Activated CD4-positive, alpha-beta memory T cell treated with anti-CD3 and anti-CD28 coated beads for 36 hours (primary cell): ENCODE measurements at regions of chr7 and their contacts with region 1.

Region 1: GRCh38 chr7:66894463-66895080 is 26.5 kb upstream of the TMEM248 start:
- DNase-seq: peak; percentile 14
- H3K4me3 Mint-ChIP-seq: no peak overlapping the region
- H3K27ac Mint-ChIP-seq: no peak overlapping the region
- H3K4me1 Mint-ChIP-seq: no peaks in the 10 kb centered on the region
- H3K27me3 Mint-ChIP-seq: no peaks in the 10 kb centered on the region

Region 2: GRCh38 chr7:66804001-66804400 is 90.6 kb before region 1 on chr7:
- CTCF ChIA-PET with region 1: no interaction called
- POLR2A ChIA-PET with region 1: no interaction called
- intact Hi-C with region 1: no loop called
- DNase-seq: no peak
- H3K4me3 Mint-ChIP-seq: no peak overlapping the region
- H3K27ac Mint-ChIP-seq: no peak overlapping the region
- H3K4me1 Mint-ChIP-seq: no peaks in the 10 kb centered on the region
- H3K27me3 Mint-ChIP-seq: no peaks in the 10 kb centered on the region

Region 3: DNA sequence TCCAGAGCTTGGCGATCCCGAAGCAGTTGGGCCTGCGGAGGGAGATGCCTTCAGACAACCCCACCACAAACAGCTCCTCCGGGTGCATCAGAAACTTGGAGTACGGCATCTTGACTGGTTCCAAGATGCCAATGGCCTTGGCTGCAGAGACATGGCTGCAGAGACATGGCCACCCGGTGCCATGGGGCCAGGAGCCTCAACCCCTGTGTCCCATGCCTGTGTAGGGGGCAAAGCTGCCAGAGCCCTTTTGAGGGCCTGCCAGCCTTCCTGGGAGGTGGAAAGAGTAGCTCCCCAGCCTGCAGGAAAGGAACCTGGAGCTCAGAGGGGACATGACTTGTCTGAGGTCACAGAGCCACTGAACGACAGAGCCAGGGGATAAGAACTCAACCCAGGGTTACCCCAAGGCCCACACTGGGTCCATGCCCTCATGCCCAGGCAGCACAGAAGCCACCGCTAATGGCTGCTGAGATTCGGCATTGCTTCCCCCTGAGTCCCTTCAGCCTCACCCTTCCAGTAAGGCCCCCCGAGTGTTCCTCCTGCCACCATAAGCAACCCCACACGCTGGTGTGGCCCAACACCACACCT is 70.4 kb before region 1 on chr7:
- CTCF ChIA-PET with region 1: interaction called, 4 read pairs
- POLR2A ChIA-PET with region 1: no interaction called
- intact Hi-C with region 1: loop called (anchors 1 kb)
- DNase-seq: no peak
- H3K4me3 Mint-ChIP-seq: no peak overlapping the region
- H3K27ac Mint-ChIP-seq: no peak overlapping the region
- H3K4me1 Mint-ChIP-seq: no peaks in the 10 kb centered on the region
- H3K27me3 Mint-ChIP-seq: no peaks in the 10 kb centered on the region

Region 4: DNA sequence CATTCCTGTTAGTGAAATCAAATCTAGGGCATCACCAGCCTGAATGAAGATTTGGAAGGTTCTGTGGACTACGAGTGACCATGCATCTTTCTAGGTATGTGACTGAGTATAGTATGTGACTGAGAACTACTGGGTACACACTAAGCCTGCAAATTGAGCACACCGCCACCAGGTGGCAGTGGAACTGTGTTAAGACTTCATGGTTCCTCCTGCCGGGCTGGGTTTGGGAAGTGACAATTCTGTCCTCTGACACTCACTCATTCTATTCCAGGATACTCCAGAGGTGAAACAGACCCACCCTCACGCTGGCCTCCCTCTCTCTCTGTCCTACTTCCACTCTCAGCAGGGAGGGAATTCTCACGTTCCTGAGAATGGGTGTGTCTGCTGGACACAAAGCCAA is 57.6 kb before region 1 on chr7:
- CTCF ChIA-PET with region 1: interaction called, 5 read pairs
- POLR2A ChIA-PET with region 1: no interaction called
- intact Hi-C with region 1: loop called (anchors 1 kb)
- DNase-seq: peak; percentile 72
- H3K4me3 Mint-ChIP-seq: no peak overlapping the region
- H3K27ac Mint-ChIP-seq: no peak overlapping the region
- H3K4me1 Mint-ChIP-seq: no peaks in the 10 kb centered on the region
- H3K27me3 Mint-ChIP-seq: peaks cover 2% of the 10 kb centered on the region

Region 5: GRCh38 chr7:66905689-66906088 is 11.1 kb after region 1 on chr7:
- CTCF ChIA-PET with region 1: interaction called, 11 read pairs
- POLR2A ChIA-PET with region 1: no interaction called
- intact Hi-C with region 1: no loop called
- DNase-seq: no peak
- H3K4me3 Mint-ChIP-seq: no peak overlapping the region
- H3K27ac Mint-ChIP-seq: no peak overlapping the region
- H3K4me1 Mint-ChIP-seq: no peaks in the 10 kb centered on the region
- H3K27me3 Mint-ChIP-seq: no peaks in the 10 kb centered on the region

Region 6: GRCh38 chr7:68269405-68269804 is 1374.8 kb after region 1 on chr7:
- CTCF ChIA-PET with region 1: no interaction called
- POLR2A ChIA-PET with region 1: no interaction called
- intact Hi-C with region 1: no loop called
- DNase-seq: no peak
- H3K4me3 Mint-ChIP-seq: no peak overlapping the region
- H3K27ac Mint-ChIP-seq: no peak overlapping the region
- H3K4me1 Mint-ChIP-seq: no peaks in the 10 kb centered on the region
- H3K27me3 Mint-ChIP-seq: no peaks in the 10 kb centered on the region